PC-9 (cell line): ENCODE measurements at regions of chrX and their contacts with region 1.

Region 1: DNA sequence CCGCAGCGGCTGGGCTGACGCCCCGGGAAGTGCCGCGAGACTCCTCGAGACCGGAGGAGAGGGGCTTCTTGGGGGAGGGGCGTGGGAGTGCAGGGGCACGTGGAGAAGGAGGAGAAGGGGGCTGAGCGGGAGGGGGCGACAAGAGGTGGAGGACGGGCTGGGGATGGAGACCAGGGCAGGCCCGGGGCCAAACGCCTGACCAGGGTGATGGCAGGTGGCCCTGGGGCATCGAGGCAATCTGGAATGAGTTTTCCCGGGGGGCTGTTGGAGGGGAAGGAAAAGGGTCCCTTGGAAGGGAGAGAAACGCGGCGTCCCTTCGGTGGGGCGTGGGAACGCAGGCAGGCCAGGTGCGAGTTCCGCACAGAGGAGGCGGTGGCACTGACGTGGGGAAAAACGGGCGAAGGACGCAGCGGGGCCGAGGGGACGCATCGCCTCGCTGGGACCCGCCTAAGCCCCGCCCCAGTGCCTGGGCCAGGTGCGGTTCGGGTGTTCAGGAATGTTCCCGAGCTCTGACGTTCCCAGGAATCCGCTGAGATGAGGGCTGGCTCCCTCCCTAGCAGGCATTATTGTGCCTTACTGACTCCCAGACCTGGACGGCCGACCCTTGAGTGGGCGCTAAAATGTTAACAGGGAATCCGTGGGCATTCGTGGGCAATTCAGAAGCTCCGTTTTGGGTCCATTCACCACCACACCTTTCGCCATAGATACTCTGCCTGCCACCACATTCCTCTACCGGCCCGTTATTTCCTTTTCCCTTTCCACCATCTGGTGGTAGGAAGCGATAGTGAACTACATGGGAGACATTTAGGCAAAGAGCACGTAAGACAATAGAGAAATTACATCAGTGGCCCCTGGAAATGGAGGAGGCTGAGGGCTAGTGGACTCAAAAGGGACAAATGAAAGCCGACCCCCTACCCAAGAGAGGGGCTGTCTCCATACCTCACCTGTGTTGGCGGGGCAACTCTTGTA is 795 bp upstream of the SH3KBP1 start:
- DNase-seq: peak; percentile 53 to 70
- H3K4me3 ChIP-seq: peak overlapping the region; percentile 65
- H3K27ac ChIP-seq: peak overlapping the region; percentile 77
- H3K4me1 ChIP-seq: peaks cover 33% of the 10 kb centered on the region
- H3K27me3 ChIP-seq: no peaks in the 10 kb centered on the region
- CTCF ChIP-seq: peak; percentile 60

Region 2: GRCh38 chrX:19544693-19545305 is 343.4 kb before region 1 on chrX:
- CTCF ChIA-PET with region 1: no interaction called
- POLR2A ChIA-PET with region 1: no interaction called
- intact Hi-C with region 1: loop called (anchors 1 kb)
- DNase-seq: peak; percentile 26 to 43
- H3K4me3 ChIP-seq: no peak overlapping the region
- H3K27ac ChIP-seq: no peak overlapping the region
- H3K4me1 ChIP-seq: no peaks in the 10 kb centered on the region
- H3K27me3 ChIP-seq: no peaks in the 10 kb centered on the region
- CTCF ChIP-seq: peak; percentile 78

Region 3: DNA sequence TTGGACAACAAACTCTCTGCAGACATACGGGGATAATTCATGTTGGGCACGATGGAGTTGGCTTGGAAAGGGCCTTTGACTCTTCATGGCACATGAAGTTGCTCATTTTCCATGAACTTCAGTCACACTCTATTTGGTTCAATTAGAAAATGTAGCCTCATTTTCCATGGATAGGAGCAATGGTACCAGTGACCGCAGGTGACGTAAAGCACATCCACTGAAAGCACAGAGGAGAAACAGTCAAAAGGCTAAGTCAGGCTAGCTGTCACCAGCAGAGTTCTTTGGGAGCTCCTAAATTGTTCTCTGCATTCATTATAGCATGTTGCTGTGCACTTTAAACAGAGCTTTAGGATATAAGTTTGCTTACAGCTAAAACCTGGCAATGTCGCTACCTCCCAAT is 333.0 kb before region 1 on chrX:
- CTCF ChIA-PET with region 1: no interaction called
- POLR2A ChIA-PET with region 1: no interaction called
- intact Hi-C with region 1: no loop called
- DNase-seq: no peak
- H3K4me3 ChIP-seq: no peak overlapping the region
- H3K27ac ChIP-seq: no peak overlapping the region
- H3K4me1 ChIP-seq: no peaks in the 10 kb centered on the region
- H3K27me3 ChIP-seq: no peaks in the 10 kb centered on the region
- CTCF ChIP-seq: no peak

Region 4: DNA sequence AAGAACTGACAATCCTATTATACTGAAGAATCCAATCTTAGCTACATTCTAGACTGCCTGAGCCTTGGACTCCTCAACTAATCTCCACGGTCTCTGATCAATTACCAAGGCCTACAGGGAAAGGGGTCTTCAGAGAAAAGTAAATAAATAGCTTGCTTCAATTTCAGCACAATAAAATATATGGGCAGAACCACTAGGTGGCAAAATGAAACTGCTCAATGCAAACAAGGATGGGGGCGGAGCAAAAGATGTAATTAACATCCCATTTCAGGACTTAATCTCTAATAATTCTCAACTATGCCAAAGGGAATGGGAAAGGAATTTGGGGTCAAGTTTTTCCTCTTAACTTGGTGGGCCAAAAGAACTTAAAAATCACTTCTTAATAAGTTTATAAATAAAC is 294.5 kb before region 1 on chrX:
- CTCF ChIA-PET with region 1: interaction called, 12 read pairs
- POLR2A ChIA-PET with region 1: no interaction called
- intact Hi-C with region 1: loop called (anchors 1 kb)
- DNase-seq: peak in 1 of 2 experiments; percentile 11
- H3K4me3 ChIP-seq: no peak overlapping the region
- H3K27ac ChIP-seq: peak overlapping the region; percentile 39; the same call in 1 of the 2 replicates
- H3K4me1 ChIP-seq: no peaks in the 10 kb centered on the region
- H3K27me3 ChIP-seq: no peaks in the 10 kb centered on the region
- CTCF ChIP-seq: peak; percentile 71

Region 5: GRCh38 chrX:19739683-19740082 is 148.5 kb before region 1 on chrX:
- CTCF ChIA-PET with region 1: no interaction called
- POLR2A ChIA-PET with region 1: no interaction called
- intact Hi-C with region 1: loop called (anchors 1 kb)
- DNase-seq: peak in 1 of 2 experiments; percentile 61
- H3K4me3 ChIP-seq: no peak overlapping the region
- H3K27ac ChIP-seq: no peak overlapping the region
- H3K4me1 ChIP-seq: peaks cover 9% of the 10 kb centered on the region; the same call in 1 of the 2 replicates
- H3K27me3 ChIP-seq: no peaks in the 10 kb centered on the region
- CTCF ChIP-seq: peak; percentile 75

Region 6: GRCh38 chrX:19758539-19758938 is 129.7 kb before region 1 on chrX:
- CTCF ChIA-PET with region 1: interaction called, 3 read pairs
- POLR2A ChIA-PET with region 1: no interaction called
- intact Hi-C with region 1: loop called (anchors 5 kb)
- DNase-seq: no peak
- H3K4me3 ChIP-seq: no peak overlapping the region
- H3K27ac ChIP-seq: no peak overlapping the region
- H3K4me1 ChIP-seq: peaks cover 31% of the 10 kb centered on the region
- H3K27me3 ChIP-seq: no peaks in the 10 kb centered on the region
- CTCF ChIP-seq: no peak

Region 7: DNA sequence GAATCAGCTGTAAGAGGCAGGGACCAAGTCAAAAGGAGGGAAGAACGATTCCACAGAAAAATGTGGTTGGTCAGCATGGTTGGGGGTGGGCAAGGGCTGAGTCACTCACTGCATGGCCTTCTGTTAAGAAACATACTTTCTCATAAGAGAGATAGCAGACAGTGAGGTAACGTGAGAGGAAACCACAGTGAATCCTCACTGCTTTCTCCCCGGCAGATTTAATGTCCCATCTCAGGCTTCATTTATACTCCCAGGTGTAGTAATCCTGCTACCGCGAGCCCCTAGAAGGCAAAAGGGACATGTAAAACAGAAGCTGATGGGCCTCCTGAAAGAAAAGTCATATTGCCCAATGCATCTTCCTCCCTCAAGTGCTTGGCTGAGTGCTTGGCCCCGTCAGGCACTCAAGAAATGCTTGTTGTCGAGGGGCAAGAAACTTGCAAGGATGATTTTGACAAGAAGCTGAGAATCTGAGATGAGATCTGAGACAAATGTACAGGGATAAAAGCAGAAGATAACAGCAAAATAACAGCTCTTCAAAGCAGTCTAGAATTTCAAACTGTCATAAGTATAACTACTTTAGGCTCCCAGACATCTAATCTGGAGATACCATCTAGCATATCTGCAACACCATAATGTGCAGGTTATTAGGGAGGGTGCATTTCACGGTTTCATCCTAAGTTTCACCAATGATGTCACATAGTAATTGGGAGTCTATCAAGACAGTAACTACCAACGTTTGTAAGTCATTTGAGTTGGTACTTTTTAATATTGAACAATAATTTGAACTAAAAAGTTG is 41.0 kb before region 1 on chrX:
- CTCF ChIA-PET with region 1: no interaction called
- POLR2A ChIA-PET with region 1: no interaction called
- intact Hi-C with region 1: loop called (anchors 5 kb)
- DNase-seq: peak; percentile 41 to 63
- H3K4me3 ChIP-seq: no peak overlapping the region
- H3K27ac ChIP-seq: 0 out of 2 replicates have a peak overlapping the region, but pooled peaks have one; percentile 25
- H3K4me1 ChIP-seq: peaks cover 15% of the 10 kb centered on the region
- H3K27me3 ChIP-seq: no peaks in the 10 kb centered on the region
- CTCF ChIP-seq: no peak

Region 8: GRCh38 chrX:21427086-21427485 is 1538.9 kb after region 1 on chrX:
- CTCF ChIA-PET with region 1: no interaction called
- POLR2A ChIA-PET with region 1: no interaction called
- intact Hi-C with region 1: no loop called
- DNase-seq: no peak
- H3K4me3 ChIP-seq: no peak overlapping the region
- H3K27ac ChIP-seq: no peak overlapping the region
- H3K4me1 ChIP-seq: no peaks in the 10 kb centered on the region
- H3K27me3 ChIP-seq: no peaks in the 10 kb centered on the region
- CTCF ChIP-seq: no peak